H1 (cell line): ENCODE measurements at regions of chr11 and their contacts with region 1.

Region 1: GRCh38 chr11:34512840-34513681 is 533 bp downstream of the ELF5 start:
- DNase-seq: peak; percentile 54 to 78
- H3K4me3 ChIP-seq: no peak overlapping the region
- H3K27ac ChIP-seq: no peak overlapping the region
- H3K4me1 ChIP-seq: peaks cover 0 to 9% (median 5%) of the 10 kb centered on the region in 4 experiments; a peak in 4 of 7 replicates
- H3K27me3 ChIP-seq: no peaks in the 10 kb centered on the region
- CTCF ChIP-seq: peak; percentile 87 to 95 (median 89)
- EP300 ChIP-seq: no peak
- POLR2A ChIP-seq: no peak
- RAD21 ChIP-seq: peak; percentile 47 to 62

Region 2: GRCh38 chr11:34492806-34493414 is 20.2 kb before region 1 on chr11:
- CTCF ChIA-PET with region 1: interaction called, 18 read pairs
- POLR2A ChIA-PET with region 1: no interaction called
- DNase-seq: peak; percentile 7 to 65
- H3K4me3 ChIP-seq: no peak overlapping the region
- H3K27ac ChIP-seq: no peak overlapping the region
- H3K4me1 ChIP-seq: no peaks in the 10 kb centered on the region
- H3K27me3 ChIP-seq: no peaks in the 10 kb centered on the region
- CTCF ChIP-seq: peak in 2 of 3 experiments; percentile 52 to 67; a peak in 3 of 4 replicates
- EP300 ChIP-seq: no peak
- POLR2A ChIP-seq: no peak
- RAD21 ChIP-seq: peak; percentile 67 to 74

Region 3: GRCh38 chr11:34525887-34526636 is 13.0 kb after region 1 on chr11:
- CTCF ChIA-PET with region 1: interaction called, 72 read pairs
- POLR2A ChIA-PET with region 1: no interaction called
- DNase-seq: no peak
- H3K4me3 ChIP-seq: no peak overlapping the region
- H3K27ac ChIP-seq: no peak overlapping the region
- H3K4me1 ChIP-seq: no peaks in the 10 kb centered on the region
- H3K27me3 ChIP-seq: no peaks in the 10 kb centered on the region
- CTCF ChIP-seq: no peak
- EP300 ChIP-seq: no peak
- POLR2A ChIP-seq: no peak
- RAD21 ChIP-seq: no peak

Region 4: GRCh38 chr11:34540870-34541269 is 27.8 kb after region 1 on chr11:
- CTCF ChIA-PET with region 1: interaction called, 13 read pairs
- POLR2A ChIA-PET with region 1: no interaction called
- DNase-seq: no peak
- H3K4me3 ChIP-seq: no peak overlapping the region
- H3K27ac ChIP-seq: no peak overlapping the region
- H3K4me1 ChIP-seq: no peaks in the 10 kb centered on the region
- H3K27me3 ChIP-seq: no peaks in the 10 kb centered on the region
- CTCF ChIP-seq: no peak
- EP300 ChIP-seq: no peak
- POLR2A ChIP-seq: no peak
- RAD21 ChIP-seq: no peak

Region 5: GRCh38 chr11:34890812-34891211 is 377.8 kb after region 1 on chr11:
- CTCF ChIA-PET with region 1: interaction called, 10 read pairs
- POLR2A ChIA-PET with region 1: no interaction called
- DNase-seq: no peak
- H3K4me3 ChIP-seq: no peak overlapping the region
- H3K27ac ChIP-seq: no peak overlapping the region
- H3K4me1 ChIP-seq: no peaks in the 10 kb centered on the region
- H3K27me3 ChIP-seq: no peaks in the 10 kb centered on the region
- CTCF ChIP-seq: peak in 1 of 3 experiments; percentile 29; a peak in 2 of 4 replicates
- EP300 ChIP-seq: no peak
- POLR2A ChIP-seq: no peak
- RAD21 ChIP-seq: peak; percentile 44 to 54